Activated CD4-positive, alpha-beta memory T cell treated with anti-CD3 and anti-CD28 coated beads, Interleukin-2, amount 10 ng/mL, durations not matched to agents 7 days and 5 days (primary cell): ENCODE measurements at regions of chr1 and their contacts with region 1.

Region 1: GRCh38 chr1:26378088-26378878 is 5.7 kb upstream of the ZNF683 start:
- DNase-seq: peak; percentile 89
- H3K4me3 Mint-ChIP-seq: peak overlapping the region; percentile 52
- H3K27ac Mint-ChIP-seq: peak overlapping the region; percentile 91
- H3K4me1 Mint-ChIP-seq: peaks cover 75% of the 10 kb centered on the region
- H3K27me3 Mint-ChIP-seq: no peaks in the 10 kb centered on the region

Region 2: GRCh38 chr1:26259578-26259977 is 118.7 kb before region 1 on chr1:
- CTCF ChIA-PET with region 1: no interaction called
- POLR2A ChIA-PET with region 1: no interaction called
- DNase-seq: no peak
- H3K4me3 Mint-ChIP-seq: no peak overlapping the region
- H3K27ac Mint-ChIP-seq: no peak overlapping the region
- H3K4me1 Mint-ChIP-seq: no peaks in the 10 kb centered on the region
- H3K27me3 Mint-ChIP-seq: no peaks in the 10 kb centered on the region

Region 3: DNA sequence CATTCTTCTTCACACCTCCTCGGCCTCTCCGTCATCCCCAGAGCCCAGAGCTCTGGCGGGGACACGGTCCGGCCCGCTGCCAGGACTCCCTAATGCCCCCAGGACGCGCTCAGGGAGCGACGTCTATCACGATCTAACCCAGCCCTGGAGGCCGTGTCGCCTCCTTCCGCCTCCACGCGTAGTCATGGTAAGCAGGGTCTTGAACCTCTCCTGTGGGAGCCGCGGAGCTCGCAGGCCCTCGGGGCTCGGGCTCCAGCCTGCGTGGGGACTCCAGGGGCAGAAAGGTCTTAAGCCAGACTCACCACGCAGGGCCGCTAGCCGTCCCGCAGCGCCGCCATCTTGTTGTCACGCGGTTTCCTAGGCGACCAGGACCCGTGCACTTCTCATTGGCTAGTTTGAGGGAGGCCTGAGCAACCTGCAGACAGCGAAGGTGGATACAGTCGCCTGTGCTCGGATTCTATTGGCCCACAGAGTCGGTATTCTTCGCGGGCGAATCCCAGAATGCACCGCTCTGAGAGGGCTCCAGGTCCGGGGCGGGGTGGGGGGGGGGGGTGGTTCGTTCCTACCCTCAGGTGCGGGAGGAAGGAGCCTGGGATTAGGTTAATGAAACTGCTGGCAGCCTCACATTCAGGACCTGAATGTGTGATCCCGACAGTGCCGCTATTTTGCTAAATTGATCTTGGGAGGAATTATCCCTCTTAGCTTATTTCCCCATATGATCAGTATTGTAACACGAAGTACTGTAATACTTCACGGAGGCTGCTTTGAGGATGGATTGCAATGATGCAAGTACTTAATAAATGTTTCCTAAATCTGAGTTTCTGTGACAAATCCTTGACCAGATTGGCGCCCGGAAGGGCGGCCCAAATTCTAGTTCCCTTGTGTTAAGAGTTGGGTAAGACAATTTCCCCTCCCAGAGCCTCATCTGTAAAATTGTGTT is 71.7 kb before region 1 on chr1 and contains the start of gene UBXN11:
- CTCF ChIA-PET with region 1: interaction called, 4 read pairs
- POLR2A ChIA-PET with region 1: interaction called, 13 read pairs
- DNase-seq: peak; percentile 96
- H3K4me3 Mint-ChIP-seq: peak within 1 kb of the TSS; percentile 90
- H3K27ac Mint-ChIP-seq: peak within 1 kb of the TSS; percentile 98
- H3K4me1 Mint-ChIP-seq: peaks cover 43% of the 10 kb centered on the region
- H3K27me3 Mint-ChIP-seq: no peaks in the 10 kb centered on the region
- total RNA-seq, gene UBXN11: 46.9 to 49.9 TPM

Region 4: GRCh38 chr1:26358411-26359384 is 19.6 kb before region 1 on chr1:
- CTCF ChIA-PET with region 1: interaction called, 56 read pairs
- POLR2A ChIA-PET with region 1: interaction called, 16 read pairs
- DNase-seq: peak; percentile 87
- H3K4me3 Mint-ChIP-seq: peak overlapping the region; percentile 14
- H3K27ac Mint-ChIP-seq: peak overlapping the region; percentile 48
- H3K4me1 Mint-ChIP-seq: peaks cover 60% of the 10 kb centered on the region
- H3K27me3 Mint-ChIP-seq: peaks cover 17% of the 10 kb centered on the region

Region 5: GRCh38 chr1:26363549-26364448 is 14.5 kb before region 1 on chr1:
- CTCF ChIA-PET with region 1: interaction called, 56 read pairs
- POLR2A ChIA-PET with region 1: interaction called, 16 read pairs
- DNase-seq: peak; percentile 88
- H3K4me3 Mint-ChIP-seq: no peak overlapping the region
- H3K27ac Mint-ChIP-seq: no peak overlapping the region
- H3K4me1 Mint-ChIP-seq: peaks cover 49% of the 10 kb centered on the region
- H3K27me3 Mint-ChIP-seq: peaks cover 23% of the 10 kb centered on the region

Region 6: GRCh38 chr1:26391450-26391849 is 13.2 kb after region 1 on chr1:
- CTCF ChIA-PET with region 1: interaction called, 24 read pairs
- POLR2A ChIA-PET with region 1: interaction called, 18 read pairs
- DNase-seq: peak; percentile 74
- H3K4me3 Mint-ChIP-seq: no peak overlapping the region
- H3K27ac Mint-ChIP-seq: no peak overlapping the region
- H3K4me1 Mint-ChIP-seq: peaks cover 43% of the 10 kb centered on the region
- H3K27me3 Mint-ChIP-seq: peaks cover 7% of the 10 kb centered on the region

Region 7: DNA sequence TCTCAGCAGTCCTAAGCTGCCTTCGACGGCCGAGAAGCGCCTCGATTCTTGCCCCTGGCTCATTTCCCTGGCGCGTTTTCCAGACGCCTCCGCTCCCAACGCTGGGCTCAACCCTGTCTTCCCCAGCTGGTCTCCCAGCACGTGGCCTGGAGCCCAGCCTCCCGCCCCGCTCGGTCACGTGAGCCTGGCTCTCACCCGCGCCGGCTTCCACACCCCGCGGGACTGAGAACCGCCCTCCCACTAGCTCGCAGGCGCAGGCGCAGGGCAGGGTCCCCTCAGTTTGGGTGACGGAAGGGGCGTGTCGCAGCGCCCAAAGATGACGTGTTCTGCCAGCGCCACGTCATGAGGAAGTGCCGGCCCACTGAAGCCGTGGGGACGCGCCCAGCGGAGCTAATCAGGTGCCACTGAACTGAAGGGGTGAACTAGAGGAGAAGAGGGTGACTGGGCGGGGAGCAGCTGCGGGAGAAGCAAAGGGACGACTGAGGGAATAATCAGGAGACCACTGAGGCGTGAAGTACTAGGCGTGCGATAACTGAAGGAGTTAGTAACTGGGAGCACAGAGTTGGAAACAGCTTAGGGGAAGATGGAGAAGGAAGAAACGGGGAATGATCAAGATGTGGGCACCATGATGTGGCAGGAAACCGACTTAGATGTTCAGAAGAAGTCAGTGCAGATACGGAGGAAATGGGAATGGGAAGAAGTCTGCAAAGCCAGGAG is 53.9 kb after region 1 on chr1 and contains the start of gene DHDDS:
- CTCF ChIA-PET with region 1: interaction called, 4 read pairs
- POLR2A ChIA-PET with region 1: interaction called, 10 read pairs
- DNase-seq: peak; percentile 99
- H3K4me3 Mint-ChIP-seq: peak within 1 kb of the TSS; percentile 98
- H3K27ac Mint-ChIP-seq: peak within 1 kb of the TSS; percentile 92
- H3K4me1 Mint-ChIP-seq: peaks cover 24% of the 10 kb centered on the region
- H3K27me3 Mint-ChIP-seq: peaks cover 4% of the 10 kb centered on the region
- total RNA-seq, gene DHDDS: 49.7 to 52.3 TPM